Activated CD4-positive, alpha-beta memory T cell treated with anti-CD3 and anti-CD28 coated beads, Interleukin-2, amount 10 ng/mL, durations not matched to agents 7 days and 5 days (primary cell): ENCODE measurements at regions of chr1 and their contacts with region 1.

Region 1: DNA sequence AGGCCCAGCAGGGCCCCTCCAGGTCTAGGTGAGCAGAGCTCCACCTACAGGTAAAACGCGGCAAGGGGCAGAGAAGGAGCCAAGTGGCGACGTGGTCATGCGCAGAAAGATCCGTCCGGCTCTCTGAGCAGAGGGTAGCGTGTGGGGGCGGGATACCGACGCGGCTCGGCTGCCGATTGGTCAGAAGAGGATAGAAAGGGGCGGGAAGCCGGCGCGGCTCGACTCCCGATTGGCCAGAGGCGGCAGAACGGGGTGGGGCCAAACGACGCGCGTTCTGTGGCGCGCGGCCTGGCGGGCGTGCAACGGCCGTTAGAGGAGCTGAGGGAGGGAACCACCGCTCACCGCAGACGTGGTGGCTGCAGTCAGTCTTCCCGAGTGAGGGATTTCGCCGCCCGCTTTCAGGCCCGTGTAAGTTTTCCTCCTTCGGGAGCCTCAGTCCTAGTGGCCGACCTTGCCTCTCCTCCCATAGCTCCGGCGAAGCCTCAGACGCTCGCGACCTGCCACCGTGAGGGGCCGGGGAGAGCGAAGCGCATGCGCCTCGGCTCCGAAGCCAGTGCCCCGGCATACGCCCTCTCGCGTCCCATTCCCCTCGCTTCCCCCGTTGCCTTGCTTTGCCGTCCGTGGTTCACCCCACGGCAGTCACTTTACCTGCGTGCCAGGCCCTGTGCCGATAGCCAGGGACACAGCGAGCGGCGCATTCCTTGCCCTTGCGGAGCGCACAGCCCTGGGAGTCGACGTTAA is at the start of gene CEP85:
- DNase-seq: peak; percentile 99
- H3K4me3 Mint-ChIP-seq: peak within 1 kb of the TSS; percentile 96
- H3K27ac Mint-ChIP-seq: peak within 1 kb of the TSS; percentile 87
- H3K4me1 Mint-ChIP-seq: peaks cover 40% of the 10 kb centered on the region
- H3K27me3 Mint-ChIP-seq: no peaks in the 10 kb centered on the region
- total RNA-seq, gene CEP85: 35.5 to 37.7 TPM

Region 2: GRCh38 chr1:26145041-26145959 is 88.8 kb before region 1 on chr1:
- CTCF ChIA-PET with region 1: interaction called, 18 read pairs
- POLR2A ChIA-PET with region 1: interaction called, 6 read pairs
- DNase-seq: peak; percentile 76
- H3K4me3 Mint-ChIP-seq: no peak overlapping the region
- H3K27ac Mint-ChIP-seq: no peak overlapping the region
- H3K4me1 Mint-ChIP-seq: peaks cover 2% of the 10 kb centered on the region
- H3K27me3 Mint-ChIP-seq: peaks cover 30% of the 10 kb centered on the region

Region 3: GRCh38 chr1:26177182-26177684 is 56.8 kb before region 1 on chr1 and contains the start of gene CNKSR1:
- CTCF ChIA-PET with region 1: interaction called, 31 read pairs
- POLR2A ChIA-PET with region 1: interaction called, 46 read pairs
- DNase-seq: no peak
- H3K4me3 Mint-ChIP-seq: peak within 1 kb of the TSS; percentile 50
- H3K27ac Mint-ChIP-seq: no peak within 1 kb of the TSS
- H3K4me1 Mint-ChIP-seq: no peaks in the 10 kb centered on the region
- H3K27me3 Mint-ChIP-seq: no peaks in the 10 kb centered on the region
- total RNA-seq, gene CNKSR1: 1.8 to 5.3 TPM

Region 4: GRCh38 chr1:26210147-26210870 is 23.8 kb before region 1 on chr1:
- CTCF ChIA-PET with region 1: interaction called, 42 read pairs
- POLR2A ChIA-PET with region 1: interaction called, 3 read pairs
- DNase-seq: no peak
- H3K4me3 Mint-ChIP-seq: no peak overlapping the region
- H3K27ac Mint-ChIP-seq: no peak overlapping the region
- H3K4me1 Mint-ChIP-seq: no peaks in the 10 kb centered on the region
- H3K27me3 Mint-ChIP-seq: peaks cover 11% of the 10 kb centered on the region

Region 5: DNA sequence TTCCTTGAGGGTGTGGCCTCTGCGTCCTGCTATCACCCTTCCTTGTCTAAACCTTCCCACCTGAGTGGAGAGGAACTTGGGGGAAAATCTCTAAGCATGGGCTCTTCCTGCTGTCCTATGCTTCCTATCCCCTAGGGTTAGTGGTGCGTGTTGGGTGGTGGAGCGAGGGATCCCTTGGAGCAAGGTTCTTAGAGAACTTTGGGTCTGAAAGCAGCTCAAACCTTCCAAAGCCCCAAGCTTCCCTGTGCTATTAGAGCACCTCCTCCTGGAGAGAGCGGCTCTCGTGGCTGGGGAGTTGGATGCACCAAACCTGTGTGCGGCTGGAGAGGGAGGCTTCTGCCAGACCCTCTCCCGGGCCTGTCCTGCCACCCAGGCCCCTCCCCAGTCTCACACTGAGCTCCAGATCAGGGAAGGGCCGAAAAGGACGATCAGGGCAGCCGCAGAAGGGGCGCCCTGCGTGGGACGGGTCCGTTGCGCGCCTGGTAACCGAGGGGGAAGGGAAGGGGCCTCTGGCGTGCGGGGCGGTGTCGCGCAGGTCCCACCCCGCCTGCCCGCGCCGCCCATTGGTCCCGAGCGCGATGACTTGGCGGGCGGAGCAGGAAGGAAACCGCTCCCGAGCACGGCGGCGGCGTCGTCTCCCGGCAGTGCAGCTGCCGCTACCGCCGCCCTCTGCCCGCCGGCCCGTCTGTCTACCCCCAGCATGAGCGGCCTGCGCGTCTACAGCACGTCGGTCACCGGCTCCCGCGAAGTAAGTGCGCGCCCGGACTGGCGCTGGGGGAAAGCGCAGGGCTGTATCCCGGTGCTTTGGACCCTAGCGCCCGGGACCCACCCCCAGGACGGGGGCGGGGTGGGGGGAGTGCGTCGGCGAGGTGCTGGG is 45.6 kb after region 1 on chr1 and contains the start of gene SH3BGRL3:
- CTCF ChIA-PET with region 1: interaction called, 19 read pairs
- POLR2A ChIA-PET with region 1: interaction called, 27 read pairs
- DNase-seq: peak; percentile 90
- H3K4me3 Mint-ChIP-seq: peak within 1 kb of the TSS; percentile 81
- H3K27ac Mint-ChIP-seq: peak within 1 kb of the TSS; percentile 98
- H3K4me1 Mint-ChIP-seq: peaks cover 87% of the 10 kb centered on the region
- H3K27me3 Mint-ChIP-seq: no peaks in the 10 kb centered on the region
- total RNA-seq, gene SH3BGRL3: 662 to 665 TPM

Region 6: GRCh38 chr1:26321315-26322041 is 87.4 kb after region 1 on chr1:
- CTCF ChIA-PET with region 1: interaction called, 17 read pairs
- POLR2A ChIA-PET with region 1: interaction called, 17 read pairs
- DNase-seq: peak; percentile 95
- H3K4me3 Mint-ChIP-seq: peak overlapping the region; percentile 84
- H3K27ac Mint-ChIP-seq: peak overlapping the region; percentile 97
- H3K4me1 Mint-ChIP-seq: peaks cover 51% of the 10 kb centered on the region
- H3K27me3 Mint-ChIP-seq: no peaks in the 10 kb centered on the region

Region 7: DNA sequence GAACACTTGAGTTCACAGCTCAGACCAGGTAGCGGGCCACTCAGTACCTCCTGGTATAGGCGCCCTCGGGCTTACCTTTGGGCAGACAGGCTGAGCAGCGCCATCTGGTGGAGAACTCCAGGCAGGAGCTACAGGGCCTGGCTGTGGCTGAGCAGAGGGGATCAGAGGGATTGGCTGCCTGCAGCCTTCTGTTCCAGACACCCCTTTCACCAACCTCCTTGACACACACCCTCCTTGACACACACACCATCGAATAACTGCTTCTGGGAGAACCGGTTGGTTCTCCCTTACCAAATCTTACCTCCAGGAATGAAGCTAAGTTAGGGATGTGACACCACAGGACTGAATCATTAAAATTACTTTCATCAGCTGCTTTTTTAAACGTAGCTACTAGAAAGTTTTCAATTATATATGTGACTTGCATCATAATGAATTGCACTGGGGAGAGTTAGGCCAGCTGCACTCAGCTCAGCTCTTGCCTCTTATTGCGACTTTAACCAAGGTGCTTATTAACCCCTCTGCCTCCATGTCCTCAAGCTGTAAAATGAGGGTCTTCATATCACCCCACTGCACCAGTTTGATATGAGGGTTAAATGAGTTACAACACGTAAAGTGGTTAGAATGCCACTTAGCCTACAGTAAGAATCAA is 183.2 kb after region 1 on chr1:
- CTCF ChIA-PET with region 1: interaction called, 28 read pairs
- POLR2A ChIA-PET with region 1: interaction called, 12 read pairs
- DNase-seq: peak; percentile 87
- H3K4me3 Mint-ChIP-seq: no peak overlapping the region
- H3K27ac Mint-ChIP-seq: no peak overlapping the region
- H3K4me1 Mint-ChIP-seq: peaks cover 3% of the 10 kb centered on the region
- H3K27me3 Mint-ChIP-seq: peaks cover 60% of the 10 kb centered on the region